MCF 10A (cell line): ENCODE measurements at regions of chr21 and their contacts with region 1.

Region 1: DNA sequence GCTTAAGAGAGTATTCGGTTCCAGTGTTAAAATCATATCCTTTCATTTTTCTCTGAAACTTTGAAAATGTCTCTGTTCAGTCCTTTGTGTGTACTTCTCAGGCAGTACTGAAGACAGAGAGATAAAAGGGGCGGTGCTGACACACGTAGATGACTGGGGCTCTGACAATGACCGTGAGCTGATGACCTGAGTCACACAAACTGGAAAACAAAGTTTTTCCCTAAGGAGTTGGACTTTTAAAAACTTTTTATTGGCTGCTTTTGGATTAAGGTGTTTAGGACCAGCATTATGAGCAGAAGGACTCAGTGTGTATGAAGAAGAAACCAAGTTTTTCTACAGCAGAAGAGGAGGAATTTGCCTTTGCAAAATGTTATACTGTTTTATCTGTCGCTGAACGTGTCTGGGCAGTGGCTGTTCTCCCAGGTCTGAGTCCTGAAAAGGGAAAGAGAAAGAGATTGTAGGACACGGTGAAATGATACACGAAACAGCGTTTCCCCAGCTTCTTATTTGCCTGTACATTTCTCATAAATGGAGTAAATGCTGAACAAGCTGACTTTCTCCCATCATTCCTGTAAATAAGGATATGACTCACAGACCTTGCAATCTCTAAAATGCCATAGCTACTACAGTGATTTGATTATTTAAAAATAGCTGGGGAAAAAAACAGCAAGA is 51.5 kb downstream of the MAP3K7CL start:
- DNase-seq: peak; percentile 78
- H3K4me3 Mint-ChIP-seq: peak overlapping the region; percentile 82
- H3K27ac Mint-ChIP-seq: peak overlapping the region; percentile 99
- H3K4me1 Mint-ChIP-seq: peaks cover 31% of the 10 kb centered on the region
- H3K27me3 Mint-ChIP-seq: no peaks in the 10 kb centered on the region
- CTCF ChIP-seq: no peak

Region 2: DNA sequence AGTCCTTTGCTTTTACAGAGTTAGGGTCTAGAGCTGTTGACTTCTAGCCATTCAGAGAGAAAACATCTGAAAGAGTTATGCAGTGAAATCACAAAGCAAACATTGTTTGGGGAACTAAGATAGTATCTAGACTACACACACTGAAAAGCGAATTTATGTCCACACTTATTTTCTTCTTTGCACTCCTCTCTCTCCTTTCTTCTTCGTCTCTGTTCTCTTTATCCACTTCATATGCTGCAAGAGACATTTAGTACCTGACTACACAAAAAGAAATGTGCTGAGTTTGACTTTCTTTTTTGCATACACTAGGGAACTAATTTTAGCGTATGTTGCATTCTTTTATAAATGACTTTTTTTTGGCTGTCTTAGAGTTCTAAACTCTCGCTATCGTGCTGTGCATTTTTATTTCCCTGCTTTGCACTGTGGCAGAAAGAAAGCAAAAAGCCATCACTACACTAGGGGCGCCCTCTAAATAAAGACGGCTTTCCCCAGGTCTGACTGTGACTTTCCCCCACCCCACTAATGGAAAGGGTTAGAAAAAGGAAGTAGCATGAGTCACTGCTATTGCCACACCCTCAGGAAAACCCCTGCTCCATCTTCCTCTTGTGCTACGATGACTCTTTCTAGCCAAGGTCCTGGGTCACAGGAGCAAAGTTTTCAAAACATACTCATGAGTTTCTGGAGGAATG is 14.2 kb after region 1 on chr21:
- CTCF ChIA-PET with region 1: no interaction called
- POLR2A ChIA-PET with region 1: interaction called, 60 read pairs
- intact Hi-C with region 1: no loop called
- DNase-seq: peak; percentile 94
- H3K4me3 Mint-ChIP-seq: peak overlapping the region; percentile 69
- H3K27ac Mint-ChIP-seq: peak overlapping the region; percentile 98
- H3K4me1 Mint-ChIP-seq: peaks cover 27% of the 10 kb centered on the region
- H3K27me3 Mint-ChIP-seq: no peaks in the 10 kb centered on the region
- CTCF ChIP-seq: peak; percentile 19